ENCODE measurements at regions of chr13 and their contacts with region 1.

Region 1: DNA sequence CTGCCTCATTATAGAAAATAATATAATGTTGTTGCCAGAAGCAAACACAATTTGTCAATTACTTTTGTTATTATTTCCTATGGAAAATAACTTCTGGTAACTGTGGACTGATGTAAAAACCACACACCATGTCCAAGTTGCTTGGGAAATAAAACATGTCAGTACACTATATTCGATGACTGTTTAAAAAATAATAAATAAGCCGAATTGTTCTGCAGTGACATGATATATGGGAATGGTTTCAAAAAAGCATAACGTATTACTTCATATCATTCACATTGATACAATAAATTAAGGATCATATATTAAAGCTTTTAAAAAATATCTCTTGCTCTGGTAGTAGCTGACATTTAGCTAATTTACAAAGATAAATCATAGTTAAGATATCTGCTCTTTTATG is 2062.1 kb downstream of the PCDH9 start:
- DNase-seq: no peak
- ATAC-seq: no peak
- H3K4me3 ChIP-seq: no peak overlapping the region
- H3K27ac ChIP-seq: no peak overlapping the region
- H3K4me1 ChIP-seq: no peaks in the 10 kb centered on the region
- H3K27me3 ChIP-seq: no peaks in the 10 kb centered on the region
- CTCF ChIP-seq: no peak
- EP300 ChIP-seq: no peak
- POLR2A ChIP-seq: no peak
- RAD21 ChIP-seq: no peak

Region 2: DNA sequence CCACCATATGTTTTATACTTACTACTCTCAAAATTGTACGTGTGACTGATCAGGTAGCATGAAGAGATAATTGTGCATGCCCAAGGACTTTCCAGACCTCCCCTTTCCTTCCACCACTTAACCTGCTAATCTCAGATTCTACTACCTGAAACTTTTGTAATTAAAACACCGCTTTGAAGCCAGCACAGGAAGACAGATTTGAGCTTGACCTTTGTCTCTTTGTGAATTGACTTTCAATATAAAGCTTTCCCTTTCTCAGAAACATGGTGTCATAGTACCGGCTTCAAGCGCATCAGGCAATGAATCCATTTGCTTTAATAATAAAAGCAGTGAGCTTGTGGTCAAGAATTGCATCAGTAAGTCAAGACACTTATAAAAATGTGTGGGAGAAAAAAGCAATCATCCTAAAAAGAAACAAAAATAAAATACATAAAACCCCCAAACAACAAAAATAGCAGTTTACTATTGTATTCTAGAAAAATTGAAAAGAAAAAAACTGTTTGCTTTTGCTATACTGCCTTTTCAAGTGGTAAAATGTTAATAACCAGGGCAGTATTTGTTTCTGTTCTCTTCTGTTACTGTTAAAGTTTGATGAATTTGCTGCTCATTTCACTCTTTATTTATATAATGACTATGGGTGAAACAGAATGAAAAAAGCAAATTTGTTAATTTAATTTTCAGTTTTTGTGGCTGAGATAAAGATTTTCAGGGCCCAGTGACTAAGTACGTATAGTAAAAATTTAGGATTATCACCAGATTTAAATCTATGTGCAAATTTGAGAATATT is 13.2 kb before region 1 on chr13:
- CTCF ChIA-PET with region 1: interaction called, 3 read pairs
- POLR2A ChIA-PET with region 1: interaction called, 5 read pairs
- RAD21 ChIA-PET with region 1: interaction called, 20 read pairs
- SMC1A ChIA-PET with region 1: interaction called, 10 read pairs
- in situ Hi-C with region 1: no loop called
- intact Hi-C with region 1: no loop called
- DNase-seq: peak; percentile 31
- ATAC-seq: peak; percentile 83
- H3K4me3 ChIP-seq: no peak overlapping the region
- H3K27ac ChIP-seq: no peak overlapping the region
- H3K4me1 ChIP-seq: no peaks in the 10 kb centered on the region
- H3K27me3 ChIP-seq: no peaks in the 10 kb centered on the region
- CTCF ChIP-seq: no peak
- EP300 ChIP-seq: peak; percentile 7; a peak in 2 of 4 replicates
- POLR2A ChIP-seq: no peak
- RAD21 ChIP-seq: no peak

Measured in GM12878 (cell line).